ENCODE measurements at regions of chr20 and their contacts with region 1.

Region 1: DNA sequence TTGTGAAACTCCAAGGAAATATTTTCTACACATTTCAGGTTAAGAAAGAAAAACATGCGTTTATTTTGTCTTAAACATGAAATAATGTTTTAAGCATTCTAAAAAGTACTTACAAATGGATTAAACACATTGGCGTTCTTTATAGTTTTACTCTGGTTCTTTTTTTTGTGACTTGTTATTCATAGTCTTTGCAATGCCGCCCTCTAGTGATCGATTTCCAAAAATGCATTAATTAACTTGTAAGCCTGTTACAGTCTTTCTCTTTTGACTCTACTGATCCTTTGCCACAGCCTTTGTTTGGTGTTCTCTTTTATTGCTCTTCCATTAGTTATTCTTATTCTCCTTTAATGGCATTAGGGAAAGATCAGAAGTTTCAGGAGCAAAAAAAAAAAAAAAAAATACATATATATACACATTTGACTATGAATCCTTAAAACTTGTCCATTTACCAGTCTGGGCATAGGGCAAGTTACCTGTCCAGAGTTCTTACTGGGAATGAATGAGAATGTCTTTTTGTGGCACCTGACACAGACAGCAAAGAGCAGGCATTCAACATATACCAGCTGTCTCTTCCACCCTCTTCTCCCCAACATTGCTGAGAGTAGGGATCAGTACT is 59.9 kb downstream of the MACROD2 start:
- DNase-seq: no peak
- ATAC-seq: peak; percentile 55
- H3K4me3 ChIP-seq: no peak overlapping the region
- H3K27ac ChIP-seq: no peak overlapping the region
- H3K4me1 ChIP-seq: no peaks in the 10 kb centered on the region
- H3K27me3 ChIP-seq: no peaks in the 10 kb centered on the region
- CTCF ChIP-seq: peak; percentile 47 to 71 (median 59)
- EP300 ChIP-seq: no peak
- POLR2A ChIP-seq: no peak
- RAD21 ChIP-seq: peak; percentile 77

Region 2: GRCh38 chr20:13610184-13610583 is 445.1 kb before region 1 on chr20:
- CTCF ChIA-PET with region 1: no interaction called
- POLR2A ChIA-PET with region 1: no interaction called
- RAD21 ChIA-PET with region 1: no interaction called
- SMC1A ChIA-PET with region 1: no interaction called
- in situ Hi-C with region 1: no loop called
- intact Hi-C with region 1: loop called (anchors 10 kb)
- DNase-seq: no peak
- ATAC-seq: peak; percentile 89
- H3K4me3 ChIP-seq: no peak overlapping the region
- H3K27ac ChIP-seq: no peak overlapping the region
- H3K4me1 ChIP-seq: no peaks in the 10 kb centered on the region
- H3K27me3 ChIP-seq: no peaks in the 10 kb centered on the region
- CTCF ChIP-seq: peak; percentile 36 to 59 (median 41); a peak in 3 of 6 replicates
- EP300 ChIP-seq: no peak
- POLR2A ChIP-seq: no peak
- RAD21 ChIP-seq: peak; percentile 57

Region 3: DNA sequence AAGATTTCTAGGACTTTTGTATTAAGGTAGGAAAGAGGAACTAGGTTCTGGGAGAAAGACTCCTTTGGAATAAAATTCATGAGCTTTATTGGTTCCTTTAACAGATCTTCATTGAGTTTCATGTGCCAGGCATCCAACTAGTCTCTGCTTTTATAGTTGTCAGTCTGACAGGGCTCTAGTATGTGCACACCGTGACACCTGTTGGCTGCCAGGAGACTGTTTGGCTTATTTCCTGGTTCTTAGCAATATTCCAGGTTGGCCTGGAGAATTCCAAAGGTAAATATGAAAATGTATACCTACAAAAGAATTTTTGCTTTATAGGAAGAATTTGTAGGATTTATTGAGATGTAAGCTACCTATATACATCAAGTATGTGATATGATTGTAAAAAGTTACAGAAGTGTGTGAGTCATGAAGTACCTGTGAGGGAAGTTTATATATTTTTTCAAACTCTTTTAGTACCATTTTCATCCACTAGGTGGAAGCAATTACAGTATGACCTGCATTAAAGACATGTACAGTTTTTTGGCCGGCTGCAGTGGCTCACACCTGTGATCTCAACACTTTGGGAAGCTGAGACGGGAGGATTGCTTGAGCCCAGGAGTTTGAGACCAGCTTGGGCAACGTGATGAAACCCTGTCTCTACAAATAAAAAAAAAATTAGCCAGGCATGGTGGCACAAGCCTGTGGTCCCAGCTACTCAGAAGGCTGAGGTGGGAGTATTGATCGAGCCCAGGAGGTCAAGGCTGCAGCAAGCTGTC is 235.2 kb before region 1 on chr20:
- CTCF ChIA-PET with region 1: interaction called, 61 read pairs
- POLR2A ChIA-PET with region 1: no interaction called
- RAD21 ChIA-PET with region 1: interaction called, 3 read pairs
- SMC1A ChIA-PET with region 1: interaction called, 23 read pairs
- in situ Hi-C with region 1: loop called (anchors 5 kb)
- intact Hi-C with region 1: loop called (anchors 1 kb)
- DNase-seq: no peak
- ATAC-seq: peak; percentile 92
- H3K4me3 ChIP-seq: no peak overlapping the region
- H3K27ac ChIP-seq: no peak overlapping the region
- H3K4me1 ChIP-seq: no peaks in the 10 kb centered on the region; the same call in 1 of the 2 replicates
- H3K27me3 ChIP-seq: no peaks in the 10 kb centered on the region
- CTCF ChIP-seq: peak; percentile 52 to 57 (median 56)
- EP300 ChIP-seq: no peak
- POLR2A ChIP-seq: no peak
- RAD21 ChIP-seq: peak; percentile 47

Region 4: GRCh38 chr20:13898011-13898612 is 157.1 kb before region 1 on chr20:
- CTCF ChIA-PET with region 1: interaction called, 5 read pairs
- POLR2A ChIA-PET with region 1: no interaction called
- RAD21 ChIA-PET with region 1: no interaction called
- SMC1A ChIA-PET with region 1: interaction called, 3 read pairs
- in situ Hi-C with region 1: no loop called
- intact Hi-C with region 1: loop called (anchors 2 kb)
- DNase-seq: no peak
- ATAC-seq: peak; percentile 63
- H3K4me3 ChIP-seq: no peak overlapping the region
- H3K27ac ChIP-seq: no peak overlapping the region
- H3K4me1 ChIP-seq: no peaks in the 10 kb centered on the region
- H3K27me3 ChIP-seq: no peaks in the 10 kb centered on the region
- CTCF ChIP-seq: peak in 1 of 3 experiments; percentile 13; a peak in 1 of 6 replicates
- EP300 ChIP-seq: no peak
- POLR2A ChIP-seq: no peak
- RAD21 ChIP-seq: peak; percentile 22; the same call in 1 of the 2 replicates

Region 5: DNA sequence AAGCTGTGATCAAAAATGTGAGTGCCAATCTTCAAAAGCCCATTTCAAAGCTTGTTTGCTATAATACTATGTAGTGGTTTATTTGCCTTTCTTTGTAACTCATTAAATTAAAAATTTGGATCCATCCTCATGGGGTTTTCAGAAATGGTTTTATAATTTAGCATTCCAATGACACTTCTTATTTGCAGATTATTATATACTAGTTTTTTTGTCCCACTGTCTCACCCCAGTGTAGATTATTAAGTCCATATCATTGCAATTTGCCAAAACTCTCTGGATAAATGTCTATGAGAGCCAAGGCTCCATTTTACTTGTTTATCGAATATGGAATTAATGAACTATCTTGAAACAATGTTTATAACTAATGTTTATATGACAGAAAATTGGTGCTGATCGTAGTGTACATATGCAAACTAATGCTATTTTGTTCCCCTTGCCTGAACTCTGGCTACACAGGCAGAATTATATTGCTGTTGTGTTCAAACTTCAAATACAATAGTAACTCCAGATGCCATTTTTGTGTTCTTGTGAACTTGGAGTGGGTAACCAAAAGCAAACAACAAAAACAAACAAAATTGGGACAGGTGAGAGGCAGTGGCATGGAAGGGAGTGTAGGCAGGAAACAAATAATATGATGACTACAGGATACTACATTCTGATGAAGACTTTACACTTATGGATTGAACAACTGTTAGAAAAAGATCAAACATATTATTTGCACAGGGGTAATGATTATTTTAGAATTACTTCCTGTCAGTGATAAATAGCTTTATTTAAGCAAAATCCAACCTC is 589.3 kb after region 1 on chr20:
- CTCF ChIA-PET with region 1: no interaction called
- POLR2A ChIA-PET with region 1: no interaction called
- RAD21 ChIA-PET with region 1: no interaction called
- SMC1A ChIA-PET with region 1: no interaction called
- in situ Hi-C with region 1: no loop called
- intact Hi-C with region 1: no loop called
- DNase-seq: no peak
- ATAC-seq: no peak
- H3K4me3 ChIP-seq: no peak overlapping the region
- H3K27ac ChIP-seq: no peak overlapping the region
- H3K4me1 ChIP-seq: no peaks in the 10 kb centered on the region
- H3K27me3 ChIP-seq: no peaks in the 10 kb centered on the region
- CTCF ChIP-seq: no peak
- EP300 ChIP-seq: no peak
- POLR2A ChIP-seq: no peak
- RAD21 ChIP-seq: no peak